Right lobe of liver (tissue), 6 donors: ENCODE measurements at regions of chr19 and their contacts with region 1.

Region 1: GRCh38 chr19:1113033-1113985 is 9.5 kb downstream of the GPX4 start:
- DNase-seq: peak; percentile 97 to 99 (median 98)
- ATAC-seq: peak; percentile 89 to 96 (median 93)
- H3K4me3 ChIP-seq: no peak overlapping the region
- H3K27ac ChIP-seq: peak overlapping the region; percentile 38 to 90 (median 78)
- H3K4me1 ChIP-seq: peaks cover 0 to 13% (median 2%) of the 10 kb centered on the region in 4 donors
- H3K27me3 ChIP-seq: no peaks in the 10 kb centered on the region
- CTCF ChIP-seq: peak; percentile 86 to 98 (median 92)
- POLR2A ChIP-seq: peak; percentile 33

Region 2: GRCh38 chr19:970695-971094 is 142.6 kb before region 1 on chr19:
- intact Hi-C with region 1: no loop called
- DNase-seq: no peak
- ATAC-seq: no peak
- H3K4me3 ChIP-seq: no peak overlapping the region
- H3K27ac ChIP-seq: no peak overlapping the region
- H3K4me1 ChIP-seq: no peaks in the 10 kb centered on the region
- H3K27me3 ChIP-seq: no peaks in the 10 kb centered on the region
- CTCF ChIP-seq: peak; percentile 30 to 48 (median 44)
- POLR2A ChIP-seq: no peak

Region 3: GRCh38 chr19:1183534-1184172 is 70.3 kb after region 1 on chr19:
- intact Hi-C with region 1: loop called in 1 of 2 experiments (anchors 10 kb)
- DNase-seq: peak in 2 of 3 donors; percentile 62 to 85
- ATAC-seq: peak; percentile 45 to 90 (median 76)
- H3K4me3 ChIP-seq: no peak overlapping the region
- H3K27ac ChIP-seq: peak overlapping the region in 2 of 3 donors; percentile 5 to 54
- H3K4me1 ChIP-seq: peaks cover 0 to 8% (median 0%) of the 10 kb centered on the region in 4 donors
- H3K27me3 ChIP-seq: no peaks in the 10 kb centered on the region
- CTCF ChIP-seq: no peak
- POLR2A ChIP-seq: peak; percentile 24

Region 4: DNA sequence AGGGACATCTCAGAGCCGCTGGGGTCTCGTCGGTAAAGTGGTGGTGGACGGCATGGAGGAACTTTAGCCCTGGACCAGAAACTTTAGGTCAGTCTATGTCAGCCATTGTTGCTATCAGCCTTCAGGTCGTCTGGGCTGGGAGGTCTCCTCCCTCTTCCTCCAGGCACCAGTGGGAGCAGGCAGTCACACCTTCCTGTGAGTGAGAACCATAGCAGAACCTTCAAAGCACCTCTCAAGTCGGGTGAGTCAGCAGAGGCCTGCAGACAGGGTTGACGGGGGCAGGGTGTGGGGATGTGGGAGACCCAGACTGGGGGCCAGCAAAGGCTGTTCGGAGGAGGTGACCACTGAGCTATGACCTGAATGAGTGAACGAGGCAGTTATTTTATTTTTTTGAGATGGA is 76.1 kb after region 1 on chr19:
- intact Hi-C with region 1: loop called (anchors 5 to 10 kb)
- DNase-seq: no peak
- ATAC-seq: peak in 1 of 4 donors; percentile 27
- H3K4me3 ChIP-seq: no peak overlapping the region
- H3K27ac ChIP-seq: no peak overlapping the region
- H3K4me1 ChIP-seq: no peaks in the 10 kb centered on the region
- H3K27me3 ChIP-seq: no peaks in the 10 kb centered on the region
- CTCF ChIP-seq: no peak
- POLR2A ChIP-seq: no peak